Left lung (tissue), 14 donors: ENCODE measurements at regions of chr12 and their contacts with region 1.

Region 1: GRCh38 chr12:46933947-46934346 is 108.2 kb upstream of the SLC38A4 start:
- DNase-seq: peak in 2 of 4 donors; percentile 40 to 66
- ATAC-seq: peak; percentile 88
- H3K4me3 ChIP-seq: no peak overlapping the region
- H3K27ac ChIP-seq: no peak overlapping the region
- H3K4me1 ChIP-seq: peaks cover 0 to 4% of the 10 kb centered on the region in 2 donors
- H3K27me3 ChIP-seq: no peaks in the 10 kb centered on the region
- CTCF ChIP-seq: peak; percentile 41 to 43

Region 2: GRCh38 chr12:46686267-46686942 is 247.5 kb before region 1 on chr12:
- intact Hi-C with region 1: loop called in 1 of 2 experiments (anchors 10 kb)
- DNase-seq: no peak
- ATAC-seq: no peak
- H3K4me3 ChIP-seq: no peak overlapping the region
- H3K27ac ChIP-seq: no peak overlapping the region
- H3K4me1 ChIP-seq: no peaks in the 10 kb centered on the region
- H3K27me3 ChIP-seq: no peaks in the 10 kb centered on the region
- CTCF ChIP-seq: no peak